B cell (primary cell): ENCODE measurements at regions of chr14 and their contacts with region 1.

Region 1: GRCh38 chr14:54396493-54397335 is at the start of gene CDKN3:
- DNase-seq: peak; percentile 98
- ATAC-seq: peak; percentile 93
- H3K4me3 ChIP-seq: peak within 1 kb of the TSS; percentile 36 to 92 (median 75)
- H3K4me3 Mint-ChIP-seq: peak within 1 kb of the TSS; percentile 85
- H3K27ac ChIP-seq: no peak within 1 kb of the TSS
- H3K27ac Mint-ChIP-seq: peak within 1 kb of the TSS; percentile 70
- H3K4me1 ChIP-seq: peaks cover 0 to 13% of the 10 kb centered on the region in 2 donors
- H3K4me1 Mint-ChIP-seq: peaks cover 18% of the 10 kb centered on the region
- H3K27me3 ChIP-seq: no peaks in the 10 kb centered on the region
- H3K27me3 Mint-ChIP-seq: no peaks in the 10 kb centered on the region
- CTCF ChIP-seq: peak; percentile 48
- total RNA-seq, gene CDKN3: 0.42 and 0.87 TPM in 2 replicates

Region 2: GRCh38 chr14:52706724-52707706 is 1689.7 kb before region 1 on chr14 and contains the start of gene PSMC6:
- CTCF ChIA-PET with region 1: no interaction called
- POLR2A ChIA-PET with region 1: no interaction called
- intact Hi-C with region 1: loop called (anchors 10 kb)
- DNase-seq: peak; percentile 94
- ATAC-seq: peak; percentile 99
- H3K4me3 ChIP-seq: peak within 1 kb of the TSS; percentile 83 to 94 (median 88)
- H3K4me3 Mint-ChIP-seq: peak within 1 kb of the TSS; percentile 98
- H3K27ac ChIP-seq: peak within 1 kb of the TSS; percentile 67 to 90
- H3K27ac Mint-ChIP-seq: peak within 1 kb of the TSS; percentile 98
- H3K4me1 ChIP-seq: peaks cover 16% of the 10 kb centered on the region in 2 donors
- H3K4me1 Mint-ChIP-seq: peaks cover 24% of the 10 kb centered on the region
- H3K27me3 ChIP-seq: no peaks in the 10 kb centered on the region
- H3K27me3 Mint-ChIP-seq: no peaks in the 10 kb centered on the region
- CTCF ChIP-seq: no peak
- total RNA-seq, gene PSMC6: 75.3 and 92.2 TPM in 2 replicates

Region 3: DNA sequence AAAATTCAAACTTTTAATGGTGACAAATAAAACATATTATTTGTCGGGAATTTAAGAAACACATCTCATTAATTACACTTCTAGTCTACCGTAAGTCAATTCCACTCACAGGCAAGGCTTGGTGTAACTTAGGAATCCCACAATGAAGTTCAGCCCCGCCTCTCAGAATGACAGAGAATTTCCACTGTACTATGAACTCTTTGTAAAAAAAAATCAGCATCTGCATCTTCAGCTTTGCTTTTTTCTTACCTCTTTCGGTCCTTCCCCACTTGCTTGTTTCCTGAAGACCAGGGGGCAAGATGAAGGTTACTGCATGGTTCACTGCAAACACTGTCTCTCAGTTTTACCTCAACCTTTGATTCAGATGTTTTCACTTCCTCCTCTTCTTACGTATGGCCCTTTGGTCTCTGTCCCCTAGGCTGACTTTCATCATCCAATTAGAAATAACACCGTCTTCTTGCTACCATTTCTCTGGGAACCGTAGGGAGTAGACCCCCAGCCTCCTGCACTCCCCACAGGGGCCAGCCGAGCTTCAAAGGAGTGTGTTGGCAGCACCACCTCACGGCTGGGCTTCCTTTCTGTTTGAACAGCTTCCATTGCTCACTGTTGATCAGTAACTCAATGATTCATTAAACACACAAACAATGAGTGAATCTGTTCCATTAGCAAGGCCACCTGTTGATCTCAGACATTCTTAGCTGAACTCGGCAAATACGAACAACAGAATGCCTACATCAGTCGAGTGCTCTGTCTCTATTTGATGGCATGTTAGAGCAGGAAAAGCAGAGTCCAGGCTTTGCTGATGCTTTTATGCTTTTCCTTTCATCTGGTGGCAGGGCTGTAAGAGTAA is 783.1 kb before region 1 on chr14:
- CTCF ChIA-PET with region 1: no interaction called
- POLR2A ChIA-PET with region 1: no interaction called
- intact Hi-C with region 1: loop called (anchors 5 kb)
- DNase-seq: peak; percentile 82
- ATAC-seq: peak; percentile 90
- H3K4me3 ChIP-seq: peak overlapping the region in 1 of 5 experiments; percentile 18
- H3K4me3 Mint-ChIP-seq: peak overlapping the region; percentile 81
- H3K27ac ChIP-seq: peak overlapping the region; percentile 37 to 65
- H3K27ac Mint-ChIP-seq: peak overlapping the region; percentile 99
- H3K4me1 ChIP-seq: peaks cover 14 to 18% of the 10 kb centered on the region in 2 donors
- H3K4me1 Mint-ChIP-seq: peaks cover 38% of the 10 kb centered on the region
- H3K27me3 ChIP-seq: no peaks in the 10 kb centered on the region
- H3K27me3 Mint-ChIP-seq: no peaks in the 10 kb centered on the region
- CTCF ChIP-seq: no peak

Region 4: GRCh38 chr14:54377501-54377900 is 19.2 kb before region 1 on chr14:
- CTCF ChIA-PET with region 1: no interaction called
- POLR2A ChIA-PET with region 1: no interaction called
- intact Hi-C with region 1: loop called (anchors 1 kb)
- DNase-seq: no peak
- ATAC-seq: no peak
- H3K4me3 ChIP-seq: no peak overlapping the region
- H3K4me3 Mint-ChIP-seq: no peak overlapping the region
- H3K27ac ChIP-seq: no peak overlapping the region
- H3K27ac Mint-ChIP-seq: no peak overlapping the region
- H3K4me1 ChIP-seq: peaks cover 10% of the 10 kb centered on the region in 2 donors
- H3K4me1 Mint-ChIP-seq: peaks cover 25% of the 10 kb centered on the region
- H3K27me3 ChIP-seq: peaks cover 0 to 5% (median 3%) of the 10 kb centered on the region in 4 experiments
- H3K27me3 Mint-ChIP-seq: peaks cover 18% of the 10 kb centered on the region
- CTCF ChIP-seq: no peak

Region 5: GRCh38 chr14:54420013-54420809 is 23.5 kb after region 1 on chr14:
- CTCF ChIA-PET with region 1: no interaction called
- POLR2A ChIA-PET with region 1: no interaction called
- intact Hi-C with region 1: no loop called
- DNase-seq: peak; percentile 17
- ATAC-seq: peak; percentile 31
- H3K4me3 ChIP-seq: no peak overlapping the region
- H3K4me3 Mint-ChIP-seq: no peak overlapping the region
- H3K27ac ChIP-seq: no peak overlapping the region
- H3K27ac Mint-ChIP-seq: no peak overlapping the region
- H3K4me1 ChIP-seq: no peaks in the 10 kb centered on the region
- H3K4me1 Mint-ChIP-seq: peaks cover 3% of the 10 kb centered on the region
- H3K27me3 ChIP-seq: no peaks in the 10 kb centered on the region
- H3K27me3 Mint-ChIP-seq: no peaks in the 10 kb centered on the region
- CTCF ChIP-seq: peak; percentile 41

Region 6: DNA sequence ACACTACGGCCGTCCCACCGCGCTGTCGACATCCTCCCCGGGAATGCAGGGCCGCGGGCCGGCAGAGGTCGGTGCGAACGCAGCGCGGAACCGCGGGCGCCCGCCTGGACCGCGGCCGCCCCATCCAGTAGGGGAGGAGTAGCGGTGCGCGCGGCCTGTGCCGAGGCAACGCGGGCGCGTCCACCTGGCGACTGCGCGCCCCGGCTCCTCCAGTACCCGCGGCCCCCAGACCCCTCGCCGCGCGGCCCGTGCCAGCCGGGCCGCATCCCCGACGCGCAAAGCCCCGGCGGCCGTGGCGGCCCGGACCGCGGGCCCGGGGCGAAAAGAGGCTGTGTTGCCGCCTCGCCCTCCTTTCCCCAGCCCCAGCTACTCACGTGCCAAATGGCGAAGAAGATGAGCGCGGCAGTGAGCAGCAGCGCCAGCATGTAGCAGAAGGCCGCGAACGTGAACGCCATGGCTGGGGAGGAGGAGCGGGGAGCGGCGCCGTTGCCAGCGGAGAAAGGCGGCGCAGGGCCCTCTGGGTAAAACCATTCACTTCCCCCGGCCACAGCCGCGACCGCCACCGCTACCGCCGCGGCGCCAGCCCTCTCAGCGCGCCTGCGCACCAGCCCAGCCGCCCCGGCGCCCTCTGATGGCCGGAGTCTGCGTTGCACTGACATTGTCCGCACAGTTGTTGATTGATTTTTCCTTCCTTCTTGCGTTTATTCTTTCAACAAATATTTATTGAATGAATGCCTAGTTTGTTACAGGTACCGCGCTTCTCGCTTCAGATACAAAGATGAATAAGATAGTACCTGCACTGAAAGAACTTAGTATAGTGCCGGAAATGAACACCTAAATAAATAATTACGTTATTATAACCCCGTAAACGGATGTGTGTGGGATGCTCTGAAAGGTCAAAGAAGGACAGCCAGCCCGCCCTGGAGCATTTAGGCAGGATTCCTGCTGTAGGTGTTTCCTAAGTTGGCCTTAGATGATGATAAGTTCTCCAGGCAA is 44.5 kb after region 1 on chr14 and contains the start of gene CNIH1:
- CTCF ChIA-PET with region 1: interaction called, 3 read pairs
- POLR2A ChIA-PET with region 1: no interaction called
- intact Hi-C with region 1: loop called (anchors 1 kb)
- DNase-seq: peak; percentile 96
- ATAC-seq: peak; percentile 93
- H3K4me3 ChIP-seq: peak within 1 kb of the TSS; percentile 51 to 73 (median 62)
- H3K4me3 Mint-ChIP-seq: peak within 1 kb of the TSS; percentile 90
- H3K27ac ChIP-seq: peak within 1 kb of the TSS; percentile 74 to 82
- H3K27ac Mint-ChIP-seq: peak within 1 kb of the TSS; percentile 90
- H3K4me1 ChIP-seq: peaks cover 26 to 27% of the 10 kb centered on the region in 2 donors
- H3K4me1 Mint-ChIP-seq: peaks cover 46% of the 10 kb centered on the region
- H3K27me3 ChIP-seq: peaks cover 0 to under 1% (median 0%) of the 10 kb centered on the region in 4 experiments
- H3K27me3 Mint-ChIP-seq: peaks cover 3% of the 10 kb centered on the region
- CTCF ChIP-seq: peak; percentile 96
- total RNA-seq, gene CNIH1: 42.8 and 52.0 TPM in 2 replicates

Region 7: GRCh38 chr14:54488646-54489317 is 92.1 kb after region 1 on chr14 and contains the start of gene GMFB:
- CTCF ChIA-PET with region 1: no interaction called
- POLR2A ChIA-PET with region 1: no interaction called
- intact Hi-C with region 1: loop called (anchors 1 kb)
- DNase-seq: peak; percentile 92
- ATAC-seq: peak; percentile 96
- H3K4me3 ChIP-seq: peak within 1 kb of the TSS; percentile 69 to 97 (median 83)
- H3K4me3 Mint-ChIP-seq: peak within 1 kb of the TSS; percentile 97
- H3K27ac ChIP-seq: peak within 1 kb of the TSS; percentile 82 to 97
- H3K27ac Mint-ChIP-seq: peak within 1 kb of the TSS; percentile 98
- H3K4me1 ChIP-seq: peaks cover 41 to 52% of the 10 kb centered on the region in 2 donors
- H3K4me1 Mint-ChIP-seq: peaks cover 57% of the 10 kb centered on the region
- H3K27me3 ChIP-seq: no peaks in the 10 kb centered on the region
- H3K27me3 Mint-ChIP-seq: no peaks in the 10 kb centered on the region
- CTCF ChIP-seq: no peak
- total RNA-seq, gene GMFB: 42.6 and 49.8 TPM in 2 replicates

Region 8: DNA sequence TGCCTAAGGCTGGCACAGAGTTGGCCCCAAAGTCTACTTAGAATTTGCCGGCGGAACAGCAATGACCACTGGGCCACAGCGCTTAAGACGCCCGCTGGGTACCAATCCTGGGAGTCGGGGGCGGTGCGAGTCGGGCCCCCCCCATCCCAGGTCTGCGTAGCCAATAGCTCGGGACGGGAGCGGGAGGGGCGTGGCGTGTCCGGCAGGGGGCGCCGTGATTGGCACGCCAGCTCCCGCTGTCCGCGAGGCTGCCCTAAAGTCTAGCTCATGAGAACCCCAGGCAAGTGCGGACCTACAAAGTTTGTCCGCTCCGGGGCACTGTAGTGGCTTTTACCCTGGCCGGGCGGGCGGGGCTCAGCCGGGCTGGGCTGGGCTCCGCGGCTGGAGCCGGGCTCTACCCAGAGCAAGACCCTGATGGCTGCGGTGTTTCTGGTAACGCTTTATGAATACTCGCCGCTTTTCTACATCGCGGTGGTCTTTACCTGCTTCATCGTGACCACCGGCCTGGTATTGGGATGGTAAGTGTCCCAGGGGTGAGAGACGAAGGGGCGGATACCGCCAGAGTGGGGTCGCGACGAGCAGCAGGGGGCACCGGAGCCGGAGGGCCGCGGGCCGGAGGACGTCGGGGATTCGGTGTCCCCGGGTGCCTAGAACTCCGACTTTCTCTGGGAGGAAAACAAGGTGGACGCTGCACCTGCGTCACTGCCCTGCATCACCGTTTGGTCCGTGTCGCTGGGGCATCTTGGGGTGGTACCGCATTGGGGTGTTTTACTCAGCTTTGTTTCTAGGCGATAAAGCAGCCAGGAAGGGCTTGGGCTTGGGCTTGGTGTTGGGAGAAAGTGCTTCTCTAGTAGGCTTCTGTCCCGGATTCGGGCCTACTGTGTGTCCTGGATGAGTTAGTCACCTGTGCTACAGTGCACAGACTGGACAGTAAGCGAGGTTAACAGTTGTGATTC is 113.1 kb after region 1 on chr14 and contains the start of gene CGRRF1:
- CTCF ChIA-PET with region 1: no interaction called
- POLR2A ChIA-PET with region 1: no interaction called
- intact Hi-C with region 1: loop called (anchors 1 kb)
- DNase-seq: peak; percentile 98
- ATAC-seq: peak; percentile 98
- H3K4me3 ChIP-seq: peak within 1 kb of the TSS; percentile 79 to 99 (median 96)
- H3K4me3 Mint-ChIP-seq: peak within 1 kb of the TSS; percentile 98
- H3K27ac ChIP-seq: peak within 1 kb of the TSS; percentile 81
- H3K27ac Mint-ChIP-seq: peak within 1 kb of the TSS; percentile 94
- H3K4me1 ChIP-seq: peaks cover 21 to 25% of the 10 kb centered on the region in 2 donors
- H3K4me1 Mint-ChIP-seq: peaks cover 44% of the 10 kb centered on the region
- H3K27me3 ChIP-seq: no peaks in the 10 kb centered on the region
- H3K27me3 Mint-ChIP-seq: no peaks in the 10 kb centered on the region
- CTCF ChIP-seq: peak; percentile 57
- total RNA-seq, gene CGRRF1: 15.8 and 17.9 TPM in 2 replicates